Calu3 (cell line): ENCODE measurements at regions of chr14 and their contacts with region 1.

Region 1: DNA sequence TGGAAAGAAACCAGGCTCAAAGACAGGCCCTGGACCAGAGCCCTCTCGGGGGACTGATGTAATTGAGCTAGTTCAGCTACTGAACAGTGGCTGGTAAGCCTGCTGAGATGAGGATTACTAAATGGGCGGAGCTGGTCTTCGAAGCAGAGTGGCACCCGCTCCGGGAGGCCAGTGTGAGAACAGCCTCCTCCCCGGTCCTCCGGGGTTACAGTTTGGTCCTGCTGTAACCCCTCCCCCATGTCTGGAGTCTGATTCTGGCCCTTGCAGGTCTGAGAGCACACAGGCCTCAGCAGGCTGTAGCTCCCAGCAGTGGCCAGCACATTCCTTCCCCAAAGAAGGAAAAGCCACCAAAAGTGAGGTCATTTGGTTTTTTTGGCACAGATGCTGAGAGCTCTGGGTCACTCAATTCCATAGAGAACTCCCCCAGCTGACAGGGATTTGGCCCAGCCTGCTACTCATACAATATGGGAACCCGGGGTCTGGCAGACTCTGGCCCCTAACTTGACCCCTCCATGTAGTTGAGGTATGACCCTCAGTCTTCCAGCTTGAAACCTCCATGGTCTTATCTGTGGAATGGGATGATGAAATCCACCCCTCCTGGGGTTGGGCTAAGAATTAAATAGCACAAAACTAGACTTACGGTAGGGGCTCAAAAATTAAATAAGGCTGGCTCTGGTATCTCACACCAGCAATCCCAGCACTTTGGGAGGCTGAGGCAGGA is 39.0 kb downstream of the ACTN1 start:
- DNase-seq: peak; percentile 86
- H3K4me3 Mint-ChIP-seq: peak overlapping the region; percentile 40
- H3K27ac Mint-ChIP-seq: peak overlapping the region; percentile 80
- H3K4me1 Mint-ChIP-seq: peaks cover 75% of the 10 kb centered on the region
- H3K27me3 Mint-ChIP-seq: no peaks in the 10 kb centered on the region
- CTCF ChIP-seq: no peak

Region 2: GRCh38 chr14:68757618-68758081 is 182.4 kb before region 1 on chr14:
- CTCF ChIA-PET with region 1: no interaction called
- intact Hi-C with region 1: no loop called
- DNase-seq: no peak
- H3K4me3 Mint-ChIP-seq: no peak overlapping the region
- H3K27ac Mint-ChIP-seq: no peak overlapping the region
- H3K4me1 Mint-ChIP-seq: peaks cover 17% of the 10 kb centered on the region
- H3K27me3 Mint-ChIP-seq: no peaks in the 10 kb centered on the region
- CTCF ChIP-seq: no peak

Region 3: GRCh38 chr14:68979021-68979782 is 39.1 kb after region 1 on chr14 and contains the start of gene ACTN1:
- CTCF ChIA-PET with region 1: interaction called, 6 read pairs
- intact Hi-C with region 1: loop called (anchors 5 kb)
- DNase-seq: peak; percentile 95
- H3K4me3 Mint-ChIP-seq: peak within 1 kb of the TSS; percentile 79
- H3K27ac Mint-ChIP-seq: peak within 1 kb of the TSS; percentile 71
- H3K4me1 Mint-ChIP-seq: peaks cover 54% of the 10 kb centered on the region
- H3K27me3 Mint-ChIP-seq: no peaks in the 10 kb centered on the region
- CTCF ChIP-seq: no peak
- total RNA-seq, gene ACTN1: 246 and 326 TPM in 2 replicates

Region 4: GRCh38 chr14:69005432-69006147 is 65.5 kb after region 1 on chr14:
- CTCF ChIA-PET with region 1: no interaction called
- intact Hi-C with region 1: loop called (anchors 2 kb)
- DNase-seq: peak; percentile 71
- H3K4me3 Mint-ChIP-seq: peak overlapping the region; percentile 19
- H3K27ac Mint-ChIP-seq: peak overlapping the region; percentile 57
- H3K4me1 Mint-ChIP-seq: peaks cover 42% of the 10 kb centered on the region
- H3K27me3 Mint-ChIP-seq: no peaks in the 10 kb centered on the region
- CTCF ChIP-seq: no peak